ENCODE measurements at regions of chr3 and their contacts with region 1.

Region 1: DNA sequence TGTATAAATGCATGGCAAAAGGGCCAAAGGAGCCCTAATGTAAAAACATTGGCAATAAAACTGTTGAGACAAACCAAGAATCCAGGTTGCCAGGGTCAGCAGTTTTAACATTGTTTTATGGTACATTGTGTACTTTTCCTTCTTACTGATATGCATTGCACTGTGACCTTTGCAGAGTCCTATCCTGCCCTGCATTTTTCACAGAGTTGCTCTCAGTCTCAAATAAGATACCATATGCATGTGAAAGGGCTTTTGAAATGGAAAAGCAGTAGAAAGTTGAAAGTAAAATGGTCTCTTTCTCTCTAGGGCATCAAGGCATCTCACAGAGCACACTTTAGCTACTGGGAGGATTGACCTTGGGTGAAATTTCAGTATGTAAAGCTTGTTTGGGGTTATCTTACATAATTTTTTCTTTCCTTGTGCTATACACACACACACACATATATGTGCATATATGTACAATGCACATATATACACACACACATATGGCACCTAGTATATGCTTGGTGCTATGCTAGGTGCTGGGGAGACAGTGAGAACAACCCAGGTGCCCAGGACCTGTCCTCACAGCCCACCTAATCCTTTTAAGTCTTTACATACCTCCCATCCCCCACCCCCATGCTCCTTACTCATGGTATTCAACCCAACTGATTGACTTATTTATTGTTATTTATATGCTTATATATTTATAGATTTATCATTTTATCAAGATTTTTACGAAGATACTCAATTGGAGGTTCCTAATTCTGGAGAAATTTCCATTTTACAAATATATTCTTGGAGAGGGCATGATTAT is 1.2 kb upstream of the PPP2R3A start:
- DNase-seq: no peak
- ATAC-seq: no peak
- H3K4me3 ChIP-seq: no peak overlapping the region
- H3K4me3 Mint-ChIP-seq: peak overlapping the region; percentile 86
- H3K27ac ChIP-seq: no peak overlapping the region
- H3K27ac Mint-ChIP-seq: no peak overlapping the region
- H3K4me1 ChIP-seq: peaks cover 12% of the 10 kb centered on the region
- H3K4me1 Mint-ChIP-seq: peaks cover 13% of the 10 kb centered on the region
- H3K27me3 ChIP-seq: peaks cover 16 to 26% of the 10 kb centered on the region in 2 experiments
- H3K27me3 Mint-ChIP-seq: peaks cover 36% of the 10 kb centered on the region
- CTCF ChIP-seq: no peak

Region 2: DNA sequence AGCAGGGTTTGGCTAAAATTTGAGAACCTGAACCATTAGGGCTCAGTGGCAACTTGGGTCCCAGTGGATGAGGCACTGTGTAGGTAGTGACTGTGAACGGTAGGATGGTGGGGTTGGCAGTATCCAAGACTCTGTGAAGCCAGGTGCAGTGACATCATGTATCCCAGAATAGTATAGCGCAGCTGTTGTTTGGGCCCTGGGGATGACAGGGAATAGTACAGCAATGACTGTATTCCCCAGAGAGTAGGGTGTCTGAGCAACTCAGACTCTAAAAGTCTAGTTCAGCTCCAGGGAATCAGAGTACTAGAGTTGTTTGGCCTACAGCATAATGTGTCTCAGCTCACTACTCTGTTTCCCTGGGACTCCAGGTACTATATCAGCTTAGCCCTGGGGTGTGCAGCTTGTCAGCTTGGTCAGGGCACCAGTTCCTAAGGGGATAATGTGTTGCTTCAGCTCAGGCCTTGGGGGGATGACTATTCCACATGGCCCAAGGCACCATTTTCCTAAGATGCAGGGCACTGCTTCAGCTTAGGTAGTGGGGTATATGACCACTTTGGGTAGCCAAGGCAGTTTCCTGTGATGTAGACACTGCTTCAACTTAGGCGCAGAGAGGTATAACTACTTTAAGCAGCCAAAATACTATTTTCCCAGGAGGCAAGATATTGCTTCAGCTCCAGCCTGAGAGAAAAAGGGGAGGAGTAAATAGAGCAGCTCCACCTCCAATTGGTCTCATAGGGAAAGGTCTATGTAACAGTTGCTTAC is 19.3 kb before region 1 on chr3:
- CTCF ChIA-PET with region 1: no interaction called
- POLR2A ChIA-PET with region 1: no interaction called
- intact Hi-C with region 1: no loop called
- DNase-seq: no peak
- ATAC-seq: no peak
- H3K4me3 ChIP-seq: no peak overlapping the region
- H3K4me3 Mint-ChIP-seq: no peak overlapping the region
- H3K27ac ChIP-seq: no peak overlapping the region
- H3K27ac Mint-ChIP-seq: no peak overlapping the region
- H3K4me1 ChIP-seq: no peaks in the 10 kb centered on the region
- H3K4me1 Mint-ChIP-seq: no peaks in the 10 kb centered on the region
- H3K27me3 ChIP-seq: peaks cover 3 to 13% of the 10 kb centered on the region in 2 experiments
- H3K27me3 Mint-ChIP-seq: peaks cover 56% of the 10 kb centered on the region
- CTCF ChIP-seq: no peak

Region 3: DNA sequence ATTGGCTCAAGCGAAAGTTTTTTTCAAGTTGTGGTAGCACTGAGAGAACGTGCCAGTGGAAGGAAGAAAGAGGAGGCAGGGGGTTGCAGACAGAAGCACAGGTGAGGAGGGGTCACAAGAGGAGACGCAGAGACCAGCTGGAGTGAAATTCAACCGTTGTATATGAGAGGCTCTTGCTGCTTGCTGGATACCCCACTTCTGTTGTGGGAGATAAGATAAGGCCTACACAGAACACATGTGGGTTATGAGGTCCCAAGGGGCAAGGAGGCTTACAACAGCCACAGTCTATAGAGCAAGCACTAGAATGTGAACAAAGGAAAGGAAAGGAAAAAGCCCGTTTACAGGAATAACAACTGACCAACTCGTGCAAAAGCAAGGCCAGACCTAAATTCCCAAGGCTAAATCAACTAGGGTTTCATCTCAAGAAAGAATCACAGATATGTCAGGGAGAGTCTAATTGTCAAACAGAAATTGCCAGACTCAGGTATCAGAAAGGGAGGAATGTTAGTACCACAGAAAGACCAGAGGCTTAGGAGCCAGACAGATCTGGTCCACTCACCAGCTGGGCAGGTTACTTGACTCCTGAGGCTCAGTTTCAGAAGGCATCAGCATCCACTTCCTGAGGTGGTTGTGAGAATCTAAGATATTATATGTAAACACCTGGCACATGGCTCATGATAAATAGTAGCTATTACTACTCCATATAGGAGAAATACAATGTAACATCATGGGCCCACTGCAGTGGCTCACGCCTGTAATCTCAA is 170.9 kb after region 1 on chr3:
- CTCF ChIA-PET with region 1: no interaction called
- POLR2A ChIA-PET with region 1: no interaction called
- intact Hi-C with region 1: no loop called
- DNase-seq: no peak
- ATAC-seq: no peak
- H3K4me3 ChIP-seq: no peak overlapping the region
- H3K4me3 Mint-ChIP-seq: no peak overlapping the region
- H3K27ac ChIP-seq: no peak overlapping the region
- H3K27ac Mint-ChIP-seq: no peak overlapping the region
- H3K4me1 ChIP-seq: no peaks in the 10 kb centered on the region
- H3K4me1 Mint-ChIP-seq: peaks cover 13% of the 10 kb centered on the region
- H3K27me3 ChIP-seq: no peaks in the 10 kb centered on the region
- H3K27me3 Mint-ChIP-seq: no peaks in the 10 kb centered on the region
- CTCF ChIP-seq: no peak

Region 4: DNA sequence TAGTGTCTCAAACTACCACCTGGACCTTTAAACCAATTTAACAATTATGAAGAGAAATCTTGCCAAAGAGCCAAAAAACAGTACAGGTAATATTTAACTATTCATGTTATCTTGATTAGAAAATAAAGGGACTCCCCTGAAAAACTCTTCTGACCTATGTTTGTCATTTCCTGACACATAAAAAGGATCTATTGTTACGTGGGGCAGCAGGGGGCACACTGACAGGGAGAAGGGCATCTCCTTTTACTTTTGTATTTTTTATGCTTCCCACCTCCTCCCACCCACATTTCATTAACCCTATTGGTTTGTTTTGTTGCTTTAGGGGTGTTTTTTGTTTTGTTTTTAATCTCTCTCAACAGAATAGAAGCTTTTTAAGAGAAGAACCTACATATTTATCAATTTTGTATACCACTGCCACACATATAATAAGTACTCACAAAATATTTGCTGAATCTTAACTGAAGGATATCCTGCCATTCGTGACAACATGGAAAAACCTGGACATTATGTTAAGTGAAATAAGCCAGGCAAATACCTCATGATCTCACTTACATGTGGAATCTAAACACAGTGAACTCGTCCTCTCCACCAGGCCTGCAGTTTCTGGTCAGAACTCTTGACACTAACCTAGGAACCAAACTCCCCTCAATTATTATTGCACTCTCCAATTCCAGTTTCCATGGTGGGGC is 770.2 kb after region 1 on chr3:
- CTCF ChIA-PET with region 1: no interaction called
- POLR2A ChIA-PET with region 1: no interaction called
- intact Hi-C with region 1: loop called in 1 of 2 experiments (anchors 5 kb)
- DNase-seq: peak in 4 of 14 experiments; percentile 35 to 47 (median 39)
- ATAC-seq: peak; percentile 49
- H3K4me3 ChIP-seq: no peak overlapping the region
- H3K4me3 Mint-ChIP-seq: no peak overlapping the region
- H3K27ac ChIP-seq: no peak overlapping the region
- H3K27ac Mint-ChIP-seq: peak overlapping the region; percentile 50
- H3K4me1 ChIP-seq: peaks cover 36% of the 10 kb centered on the region
- H3K4me1 Mint-ChIP-seq: peaks cover 63% of the 10 kb centered on the region
- H3K27me3 ChIP-seq: no peaks in the 10 kb centered on the region
- H3K27me3 Mint-ChIP-seq: no peaks in the 10 kb centered on the region
- CTCF ChIP-seq: peak; percentile 33

Measured in CD4-positive, alpha-beta T cell (primary cell).